SK-N-SH (cell line): ENCODE measurements at regions of chr13 and their contacts with region 1.

Region 1: GRCh38 chr13:71879129-71879535 is 12.1 kb upstream of the DACH1 start:
- DNase-seq: peak; percentile 33
- H3K4me3 ChIP-seq: no peak overlapping the region; a peak in 1 of 4 replicates
- H3K27ac ChIP-seq: peak overlapping the region in 1 of 2 experiments; percentile 56; a peak in 2 of 4 replicates
- H3K4me1 ChIP-seq: peaks cover 0 to 2% of the 10 kb centered on the region in 2 experiments; a peak in 1 of 4 replicates
- H3K27me3 ChIP-seq: no peaks in the 10 kb centered on the region
- CTCF ChIP-seq: peak; percentile 71
- EP300 ChIP-seq: no peak
- RAD21 ChIP-seq: peak; percentile 86

Region 2: DNA sequence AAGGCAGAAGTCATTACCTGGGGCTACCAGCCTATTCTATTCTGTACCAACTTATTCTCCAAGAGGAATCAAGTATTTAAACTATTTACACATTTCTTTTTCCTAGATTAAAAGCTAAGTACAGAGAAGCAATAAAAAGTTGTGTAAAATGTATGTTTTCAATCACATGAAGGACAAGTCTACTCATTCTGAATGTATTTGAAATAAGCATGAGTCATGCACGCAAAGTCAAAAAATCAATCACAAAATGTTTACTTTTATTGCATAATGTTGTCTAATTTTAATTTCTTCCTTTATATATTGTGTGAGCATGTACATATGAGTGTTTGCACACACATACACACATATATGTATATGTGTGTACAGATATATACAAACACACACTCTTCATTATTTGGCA is 148.9 kb before region 1 on chr13:
- CTCF ChIA-PET with region 1: no interaction called
- POLR2A ChIA-PET with region 1: no interaction called
- DNase-seq: no peak
- H3K4me3 ChIP-seq: no peak overlapping the region
- H3K27ac ChIP-seq: no peak overlapping the region
- H3K4me1 ChIP-seq: peaks cover 4 to 6% of the 10 kb centered on the region in 2 experiments; a peak in 2 of 4 replicates
- H3K27me3 ChIP-seq: no peaks in the 10 kb centered on the region
- CTCF ChIP-seq: no peak
- EP300 ChIP-seq: no peak
- RAD21 ChIP-seq: no peak

Region 3: GRCh38 chr13:71867131-71867814 is 11.9 kb before region 1 on chr13 and contains the start of gene DACH1:
- CTCF ChIA-PET with region 1: interaction called, 29 read pairs
- POLR2A ChIA-PET with region 1: no interaction called
- DNase-seq: peak; percentile 69
- H3K4me3 ChIP-seq: peak within 1 kb of the TSS; percentile 85 to 94
- H3K27ac ChIP-seq: peak within 1 kb of the TSS; percentile 26 to 95; a peak in 3 of 4 replicates
- H3K4me1 ChIP-seq: peaks cover 0 to 6% of the 10 kb centered on the region in 2 experiments; a peak in 2 of 4 replicates
- H3K27me3 ChIP-seq: 0 out of 2 replicates have a peak, but pooled peaks cover 8% of the 10 kb centered on the region
- CTCF ChIP-seq: no peak
- EP300 ChIP-seq: no peak
- RAD21 ChIP-seq: 0 out of 2 replicates have a peak, but pooled peaks have one; percentile 6
- polyA plus RNA-seq, gene DACH1: 0.15 and 0.21 TPM in 2 replicates

Region 4: GRCh38 chr13:72204291-72204690 is 325.2 kb after region 1 on chr13:
- CTCF ChIA-PET with region 1: no interaction called
- POLR2A ChIA-PET with region 1: no interaction called
- DNase-seq: no peak
- H3K4me3 ChIP-seq: no peak overlapping the region
- H3K27ac ChIP-seq: no peak overlapping the region
- H3K4me1 ChIP-seq: peaks cover 2 to 4% of the 10 kb centered on the region in 2 experiments; a peak in 2 of 4 replicates
- H3K27me3 ChIP-seq: no peaks in the 10 kb centered on the region
- CTCF ChIP-seq: no peak
- EP300 ChIP-seq: 0 out of 4 replicates have a peak, but pooled peaks of 1 of the 2 experiments have one; percentile 33
- RAD21 ChIP-seq: no peak